ENCODE measurements at regions of chr1 and their contacts with region 1.

Region 1: DNA sequence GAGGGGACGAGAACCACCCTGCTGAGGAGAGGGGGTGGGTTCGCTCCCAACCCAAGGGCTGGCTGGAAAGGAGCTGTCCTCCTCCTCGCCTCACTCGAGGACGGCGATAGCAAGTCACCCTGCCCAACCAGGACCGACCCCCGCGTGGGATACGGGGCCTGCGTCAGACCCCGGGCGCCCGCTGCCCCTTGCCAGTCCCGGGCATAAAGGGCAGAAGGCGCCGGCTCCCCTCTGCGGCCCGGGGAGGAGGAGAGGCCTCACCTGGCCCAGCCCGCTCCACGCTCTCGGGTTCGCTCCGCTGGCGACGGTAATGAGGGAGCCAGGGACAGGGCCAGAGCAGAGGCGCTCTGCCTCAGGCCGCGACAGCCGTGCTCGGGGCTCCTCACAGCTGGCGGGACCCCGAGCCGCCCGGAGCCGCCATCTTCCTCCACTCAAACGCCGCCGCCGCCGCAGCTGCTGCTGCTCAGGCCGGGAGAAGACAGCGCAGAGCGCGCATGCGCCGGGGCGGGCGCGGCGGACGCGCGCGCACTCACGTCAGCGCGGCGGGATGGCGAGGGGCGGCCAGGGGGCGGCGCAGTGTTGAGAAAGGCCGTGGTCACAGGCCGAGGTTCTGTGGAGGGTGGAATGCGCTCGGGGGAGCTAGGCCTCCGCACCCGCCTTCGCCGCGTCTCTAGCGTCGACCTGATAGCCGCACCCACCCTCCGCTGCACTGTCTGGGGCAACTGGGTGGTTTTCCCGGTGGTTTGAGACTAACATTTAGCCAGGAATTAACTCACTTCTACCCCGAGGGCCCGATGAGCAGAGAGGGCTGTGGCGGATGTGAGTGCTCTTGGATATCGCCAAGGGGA is at the start of gene FBXO42:
- DNase-seq: peak; percentile 98
- ATAC-seq: peak; percentile 96
- H3K4me3 Mint-ChIP-seq: peak within 1 kb of the TSS; percentile 98
- H3K27ac Mint-ChIP-seq: peak within 1 kb of the TSS; percentile 94
- H3K4me1 Mint-ChIP-seq: peaks cover 26% of the 10 kb centered on the region
- H3K27me3 Mint-ChIP-seq: no peaks in the 10 kb centered on the region
- total RNA-seq, gene FBXO42: 22.3 to 25.1 TPM

Region 2: DNA sequence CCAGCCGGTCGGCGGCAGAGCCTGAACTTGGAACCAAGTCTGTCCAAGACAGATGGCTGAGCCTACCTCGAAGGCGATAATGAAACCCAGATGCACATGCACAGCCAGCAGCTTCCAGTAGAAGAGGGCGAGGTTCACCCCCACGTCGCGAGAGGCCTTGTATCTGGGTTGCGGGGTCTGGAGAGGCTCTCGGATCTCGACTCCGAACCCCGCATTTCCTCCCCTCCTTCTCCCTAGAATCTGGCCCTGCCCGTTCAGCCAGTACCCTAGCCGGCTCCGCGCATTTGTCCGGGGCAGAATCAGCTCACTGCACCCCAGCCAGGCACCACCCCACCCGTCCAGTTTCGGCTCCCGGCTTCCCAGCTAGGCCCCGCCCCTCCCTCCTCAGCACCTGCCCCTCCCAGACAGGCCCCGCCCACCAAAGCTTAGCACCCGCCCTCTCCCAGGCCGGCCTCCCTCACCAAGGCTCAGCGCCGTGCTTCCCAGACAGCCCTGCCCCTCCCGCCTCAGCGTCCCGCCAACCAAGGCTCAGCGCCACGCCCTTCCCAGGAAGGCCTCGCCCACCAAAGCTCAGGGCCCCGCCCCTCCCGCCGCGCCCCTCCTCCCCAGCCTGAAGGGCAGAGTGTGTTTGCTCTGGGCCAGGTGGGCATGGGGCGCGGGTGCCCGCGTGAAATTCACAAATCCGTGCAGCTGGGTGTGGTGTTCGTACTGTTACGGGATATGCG is 135.0 kb before region 1 on chr1:
- POLR2A ChIA-PET with region 1: interaction called, 11 read pairs
- DNase-seq: peak; percentile 96
- ATAC-seq: peak; percentile 96
- H3K4me3 Mint-ChIP-seq: peak overlapping the region; percentile 91
- H3K27ac Mint-ChIP-seq: peak overlapping the region; percentile 84
- H3K4me1 Mint-ChIP-seq: peaks cover 27% of the 10 kb centered on the region
- H3K27me3 Mint-ChIP-seq: peaks cover 9% of the 10 kb centered on the region

Measured in activated naive CD8-positive, alpha-beta T cell treated with anti-CD3 and anti-CD28 coated beads, Interleukin-2, amount 10 ng/mL, durations not matched to agents 7 days and 5 days (primary cell).